ENCODE measurements at regions of chr2 and their contacts with region 1.

Region 1: DNA sequence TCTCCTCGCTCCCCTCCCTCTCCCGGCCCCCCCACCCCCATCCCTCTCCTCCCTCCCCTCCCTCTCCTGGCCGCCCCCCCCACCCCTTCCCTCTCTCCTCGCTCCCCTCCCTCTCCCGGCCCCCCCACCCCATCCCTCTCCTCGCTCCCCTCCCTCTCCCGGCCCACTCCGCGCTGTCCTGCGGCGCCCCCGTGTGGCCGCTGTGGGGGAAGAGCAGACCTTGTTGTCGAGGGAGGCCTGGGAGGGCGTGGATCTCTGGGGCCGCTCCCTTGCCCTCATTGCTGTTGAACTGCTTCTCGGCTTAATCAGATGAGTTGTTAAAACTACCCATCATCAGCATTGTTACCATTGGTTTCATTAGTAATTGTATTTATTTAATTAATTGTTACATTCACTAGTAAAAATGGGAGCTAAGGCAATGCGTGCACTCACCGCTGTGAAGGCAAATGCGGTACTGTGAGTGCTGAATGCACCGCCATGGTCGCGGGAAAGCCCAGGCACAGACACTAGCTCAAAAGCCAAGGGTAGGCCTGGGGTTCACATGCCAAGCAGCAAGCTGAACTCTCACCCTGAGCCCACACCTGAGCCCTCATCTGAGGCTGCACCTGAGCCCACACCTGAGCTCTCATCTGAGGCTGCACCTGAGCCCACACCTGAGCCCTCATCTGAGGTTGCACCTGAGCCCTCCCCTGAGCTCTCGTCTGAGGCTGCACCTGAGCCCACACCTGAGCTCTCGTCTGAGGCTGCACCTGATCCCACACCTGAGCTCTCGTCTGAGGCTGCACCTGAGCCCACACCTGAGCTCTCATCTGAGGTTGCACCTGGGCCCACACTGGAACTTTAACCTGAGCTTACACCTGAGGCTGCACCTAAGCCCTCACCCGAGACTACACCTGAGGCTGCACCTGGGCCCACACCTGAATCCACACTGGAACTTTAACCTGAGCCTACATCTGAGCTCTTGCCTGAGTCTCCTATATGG is 8.8 kb downstream of the RTP5 start:
- DNase-seq: peak; percentile 62 to 77
- H3K4me3 ChIP-seq: no peak overlapping the region
- H3K27ac ChIP-seq: no peak overlapping the region
- H3K4me1 ChIP-seq: peaks cover 6 to 14% of the 10 kb centered on the region in 2 donors
- H3K27me3 ChIP-seq: no peaks in the 10 kb centered on the region
- CTCF ChIP-seq: peak; percentile 25 to 72 (median 60)
- POLR2A ChIP-seq: no peak

Region 2: DNA sequence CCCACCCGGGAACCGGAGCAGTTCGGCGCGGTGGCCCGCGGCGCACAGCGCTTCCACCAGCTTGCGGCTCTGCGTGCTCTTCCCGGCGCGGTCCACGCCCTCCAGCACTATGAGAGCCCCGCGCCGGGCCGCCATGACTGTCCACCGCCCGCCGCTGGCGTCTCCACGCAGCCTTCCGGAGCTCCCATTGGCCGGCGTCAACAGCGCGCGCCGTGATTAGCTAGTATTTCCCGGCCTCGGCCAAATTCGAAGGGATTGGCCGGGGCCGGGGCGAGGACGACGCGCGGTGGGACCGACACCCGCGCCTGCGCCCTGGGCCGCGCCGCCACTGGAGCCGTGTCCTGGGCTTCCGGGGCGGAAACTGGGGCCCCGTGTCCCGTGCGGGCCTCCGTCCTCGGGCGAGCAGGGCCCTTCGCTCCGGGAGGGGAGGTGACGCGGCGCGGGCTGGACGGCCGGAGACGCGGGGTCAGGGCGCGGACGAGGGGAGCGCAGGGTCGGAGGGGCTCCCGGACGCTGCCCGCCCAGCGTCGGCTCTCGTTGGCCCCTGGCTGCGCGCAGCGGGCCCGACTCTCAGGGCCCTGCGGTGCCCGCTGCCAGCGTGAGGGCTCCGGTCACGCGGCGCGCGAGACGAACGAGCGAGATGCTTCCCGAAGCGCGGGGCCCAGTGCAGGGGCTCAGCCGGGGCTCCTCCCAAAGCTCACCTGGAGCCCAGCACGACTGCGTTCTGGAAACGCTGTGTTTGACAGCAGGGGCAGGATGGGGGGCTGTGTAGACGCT is 191.4 kb before region 1 on chr2 and contains the start of gene DTYMK:
- intact Hi-C with region 1: loop called (anchors 5 kb)
- DNase-seq: peak; percentile 97
- H3K4me3 ChIP-seq: peak within 1 kb of the TSS; percentile 39 to 87 (median 44)
- H3K27ac ChIP-seq: peak within 1 kb of the TSS; percentile 73 to 90 (median 89)
- H3K4me1 ChIP-seq: peaks cover 16 to 23% of the 10 kb centered on the region in 2 donors
- H3K27me3 ChIP-seq: no peaks in the 10 kb centered on the region
- CTCF ChIP-seq: peak in 1 of 6 experiments; percentile 8
- POLR2A ChIP-seq: peak; percentile 30 to 85
- total RNA-seq, gene DTYMK: 9.6 to 24.0 (median 15.7) TPM

Region 3: DNA sequence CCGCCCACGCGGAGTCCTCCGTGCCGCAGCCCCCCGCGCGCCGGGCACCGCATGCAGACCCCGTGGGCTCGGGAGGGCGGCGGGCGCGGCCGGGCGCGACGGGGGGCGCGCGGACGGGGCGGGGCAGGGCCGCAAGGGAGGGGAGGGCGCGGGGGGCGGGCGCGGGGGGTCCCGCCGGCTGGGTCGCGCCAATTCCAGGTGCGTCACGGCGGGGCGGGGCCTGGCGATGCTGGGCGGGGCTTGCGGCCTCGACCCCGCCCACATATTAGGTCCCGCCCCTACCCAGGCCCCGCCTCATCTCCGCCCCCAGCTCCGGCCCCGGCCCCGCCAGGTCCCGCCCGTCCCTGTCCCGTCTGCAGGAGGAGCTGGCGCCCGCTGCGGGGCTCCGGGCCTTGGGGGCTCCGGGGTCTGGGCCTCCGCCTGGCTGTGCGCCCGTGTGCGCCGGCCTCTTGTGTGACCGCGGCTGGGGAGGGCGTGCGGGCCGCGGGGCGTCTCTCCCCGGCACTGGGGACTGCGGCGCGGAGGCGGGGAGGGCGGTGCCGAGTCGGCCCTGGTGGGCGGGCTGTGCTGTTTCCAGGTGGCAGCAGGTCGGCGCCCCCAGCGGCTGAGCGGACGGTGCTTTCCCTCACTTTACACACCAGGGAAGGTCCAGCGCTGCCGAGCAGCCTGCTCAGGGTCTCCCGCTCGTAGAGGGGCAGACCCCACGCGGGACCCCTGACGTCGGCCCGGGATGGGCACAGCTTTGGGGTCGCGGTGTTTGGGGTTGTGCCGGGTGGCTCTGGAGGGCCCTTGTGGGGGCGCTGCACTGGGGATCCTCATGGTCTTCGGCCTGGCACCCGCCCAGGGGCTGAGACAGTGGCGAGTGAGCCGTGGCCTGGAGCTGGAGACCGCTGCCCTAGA is 175.9 kb before region 1 on chr2:
- intact Hi-C with region 1: loop called (anchors 5 kb)
- DNase-seq: peak; percentile 89 to 95
- H3K4me3 ChIP-seq: peak overlapping the region; percentile 43 to 93 (median 90)
- H3K27ac ChIP-seq: peak overlapping the region in 1 of 3 donors; percentile 69
- H3K4me1 ChIP-seq: peaks cover 16 to 17% of the 10 kb centered on the region in 2 donors
- H3K27me3 ChIP-seq: no peaks in the 10 kb centered on the region
- CTCF ChIP-seq: peak in 5 of 6 experiments; percentile 45 to 58 (median 51)
- POLR2A ChIP-seq: peak in 1 of 2 donors; percentile 32

Region 4: DNA sequence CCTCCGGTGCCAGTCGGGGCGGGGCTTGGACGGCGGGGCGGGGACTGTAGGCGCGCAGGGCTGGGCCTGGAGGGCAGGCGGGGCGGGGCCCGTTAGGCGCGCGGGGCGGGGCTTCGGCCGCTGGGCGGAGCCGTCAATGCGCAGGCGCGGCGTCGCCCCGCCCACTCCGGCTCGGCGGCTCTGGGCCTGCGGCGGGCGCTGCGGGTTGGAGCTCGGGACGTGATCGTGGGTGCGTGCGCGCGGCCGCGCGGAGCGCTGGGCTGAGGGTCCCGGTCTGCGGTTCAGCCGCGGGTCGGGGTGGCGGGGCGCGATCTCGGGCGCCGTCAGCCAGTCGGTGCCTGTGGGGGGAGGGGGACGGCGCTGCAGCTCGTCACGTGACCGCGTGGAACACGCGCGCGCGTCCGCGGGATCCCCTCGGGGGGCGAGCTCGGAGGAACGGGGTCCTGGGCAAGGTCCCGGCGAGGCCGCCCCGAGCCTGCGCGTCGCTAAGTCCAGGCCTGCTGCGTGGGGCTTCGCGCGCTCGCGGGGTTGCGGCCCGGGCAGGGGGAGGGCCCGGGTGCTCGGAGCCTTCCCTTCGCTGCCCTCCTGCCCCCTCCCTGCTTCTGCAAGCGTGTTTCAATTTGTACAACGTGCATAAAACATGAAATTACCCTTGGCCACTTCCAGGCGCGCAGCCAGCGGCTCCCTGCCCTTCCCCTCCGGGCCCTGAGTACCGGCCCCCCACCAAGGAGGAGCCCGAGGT is 143.6 kb before region 1 on chr2 and contains the start of gene D2HGDH:
- intact Hi-C with region 1: loop called (anchors 10 kb)
- DNase-seq: peak; percentile 92 to 95
- H3K4me3 ChIP-seq: peak within 1 kb of the TSS; percentile 87 to 94 (median 92)
- H3K27ac ChIP-seq: peak within 1 kb of the TSS; percentile 70 to 87 (median 71)
- H3K4me1 ChIP-seq: peaks cover 12 to 24% of the 10 kb centered on the region in 2 donors
- H3K27me3 ChIP-seq: no peaks in the 10 kb centered on the region
- CTCF ChIP-seq: no peak
- POLR2A ChIP-seq: peak; percentile 79 to 83
- total RNA-seq, gene D2HGDH: 20.2 to 34.4 (median 23.0) TPM

Measured in thyroid gland (tissue), 4 donors.